Head of caudate nucleus (tissue), 42 donors: ENCODE measurements at regions of chr12 and their contacts with region 1.

Region 1: GRCh38 chr12:50504798-50505385 is at the start of gene DIP2B:
- DNase-seq: peak; percentile 92 to 99 (median 96)

Region 2: GRCh38 chr12:50542448-50542847 is 37.6 kb after region 1 on chr12:
- intact Hi-C with region 1: no loop called
- DNase-seq: peak in 5 of 42 donors; percentile 24 to 64 (median 43)

Region 3: GRCh38 chr12:50637870-50638481 is 133.1 kb after region 1 on chr12:
- intact Hi-C with region 1: loop called (anchors 2 kb)
- DNase-seq: peak in 1 of 42 donors; percentile 30

Region 4: GRCh38 chr12:50734409-50735263 is 229.7 kb after region 1 on chr12:
- intact Hi-C with region 1: loop called (anchors 5 kb)
- DNase-seq: peak in 23 of 42 donors; percentile 7 to 77 (median 36)